SK-N-SH (cell line): ENCODE measurements at regions of chr1 and their contacts with region 1.

Region 1: DNA sequence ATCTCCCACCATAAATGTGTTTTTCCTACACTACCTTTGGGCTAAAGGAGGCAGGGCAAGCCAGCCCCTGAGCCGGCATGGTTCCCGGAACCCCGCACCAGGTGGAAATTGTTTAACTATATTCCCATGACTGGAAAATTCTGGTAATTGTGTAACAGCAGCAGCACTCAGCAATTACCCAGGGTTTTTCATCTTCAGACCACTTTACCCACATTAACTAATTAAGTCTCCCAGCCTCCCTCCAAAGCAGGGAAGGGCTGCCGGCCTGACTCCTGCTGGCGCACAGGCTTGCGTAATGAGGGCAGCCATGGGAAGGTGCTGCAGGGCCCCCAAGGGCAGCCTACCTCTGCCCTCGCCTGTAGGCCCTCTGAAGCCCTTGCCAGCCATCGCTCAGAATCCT is 140.7 kb upstream of the VAMP3 start:
- DNase-seq: peak; percentile 90
- H3K4me3 ChIP-seq: no peak overlapping the region
- H3K27ac ChIP-seq: peak overlapping the region; percentile 32 to 100; a peak in 3 of 4 replicates
- H3K4me1 ChIP-seq: peaks cover 0 to 89% of the 10 kb centered on the region in 2 experiments; a peak in 2 of 4 replicates
- H3K27me3 ChIP-seq: peaks cover 6% of the 10 kb centered on the region; the same call in 1 of the 2 replicates
- CTCF ChIP-seq: no peak
- EP300 ChIP-seq: peak in 1 of 2 experiments; percentile 93; a peak in 2 of 4 replicates
- RAD21 ChIP-seq: peak; percentile 41

Region 2: GRCh38 chr1:7586021-7586941 is 44.1 kb before region 1 on chr1:
- CTCF ChIA-PET with region 1: interaction called, 32 read pairs
- POLR2A ChIA-PET with region 1: interaction called, 37 read pairs
- DNase-seq: peak; percentile 61
- H3K4me3 ChIP-seq: no peak overlapping the region; a peak in 1 of 4 replicates
- H3K27ac ChIP-seq: peak overlapping the region in 1 of 2 experiments; percentile 99; a peak in 2 of 4 replicates
- H3K4me1 ChIP-seq: peaks cover 0 to 98% of the 10 kb centered on the region in 2 experiments; a peak in 2 of 4 replicates
- H3K27me3 ChIP-seq: no peaks in the 10 kb centered on the region
- CTCF ChIP-seq: no peak
- EP300 ChIP-seq: peak in 1 of 2 experiments; percentile 33; a peak in 1 of 4 replicates
- RAD21 ChIP-seq: no peak